WTC11 (cell line): ENCODE measurements at regions of chr11 and their contacts with region 1.

Region 1: GRCh38 chr11:31107062-31107461 is 262.5 kb downstream of the DCDC1 start:
- DNase-seq: peak; percentile 77
- ATAC-seq: peak; percentile 92
- H3K4me3 Mint-ChIP-seq: no peak overlapping the region
- H3K27ac Mint-ChIP-seq: no peak overlapping the region
- H3K4me1 Mint-ChIP-seq: peaks cover 15% of the 10 kb centered on the region
- H3K27me3 Mint-ChIP-seq: no peaks in the 10 kb centered on the region
- CTCF ChIP-seq: peak; percentile 76

Region 2: DNA sequence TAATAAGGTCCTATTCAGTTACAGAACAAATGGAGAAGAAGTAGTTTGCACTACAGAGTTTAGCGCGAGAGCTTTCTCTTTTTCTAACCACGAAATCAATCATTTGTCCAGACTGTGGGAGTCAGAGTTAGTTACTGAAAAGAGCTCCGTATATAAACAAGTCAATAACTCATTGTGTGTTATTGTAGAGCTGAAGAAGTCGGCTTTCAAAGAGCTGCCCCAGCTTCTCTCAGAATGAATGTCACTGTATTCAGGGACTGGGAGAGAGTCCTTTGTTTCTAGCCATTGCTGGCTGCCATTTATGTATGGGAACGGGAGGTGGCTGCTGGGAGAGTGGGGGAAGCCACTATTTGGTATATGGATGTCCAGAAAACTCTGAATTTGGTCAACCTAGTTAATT is 34.7 kb after region 1 on chr11:
- CTCF ChIA-PET with region 1: interaction called, 24 read pairs
- POLR2A ChIA-PET with region 1: no interaction called
- DNase-seq: no peak
- ATAC-seq: peak; percentile 29; the same call in 1 of the 2 replicates
- H3K4me3 Mint-ChIP-seq: no peak overlapping the region
- H3K27ac Mint-ChIP-seq: no peak overlapping the region
- H3K4me1 Mint-ChIP-seq: peaks cover 40% of the 10 kb centered on the region
- H3K27me3 Mint-ChIP-seq: no peaks in the 10 kb centered on the region; the same call in 1 of the 2 replicates
- CTCF ChIP-seq: no peak

Region 3: GRCh38 chr11:31233424-31233823 is 126.4 kb after region 1 on chr11:
- CTCF ChIA-PET with region 1: interaction called, 82 read pairs
- POLR2A ChIA-PET with region 1: no interaction called
- DNase-seq: no peak
- ATAC-seq: peak; percentile 60
- H3K4me3 Mint-ChIP-seq: no peak overlapping the region
- H3K27ac Mint-ChIP-seq: no peak overlapping the region
- H3K4me1 Mint-ChIP-seq: peaks cover 24% of the 10 kb centered on the region
- H3K27me3 Mint-ChIP-seq: no peaks in the 10 kb centered on the region
- CTCF ChIP-seq: no peak

Region 4: DNA sequence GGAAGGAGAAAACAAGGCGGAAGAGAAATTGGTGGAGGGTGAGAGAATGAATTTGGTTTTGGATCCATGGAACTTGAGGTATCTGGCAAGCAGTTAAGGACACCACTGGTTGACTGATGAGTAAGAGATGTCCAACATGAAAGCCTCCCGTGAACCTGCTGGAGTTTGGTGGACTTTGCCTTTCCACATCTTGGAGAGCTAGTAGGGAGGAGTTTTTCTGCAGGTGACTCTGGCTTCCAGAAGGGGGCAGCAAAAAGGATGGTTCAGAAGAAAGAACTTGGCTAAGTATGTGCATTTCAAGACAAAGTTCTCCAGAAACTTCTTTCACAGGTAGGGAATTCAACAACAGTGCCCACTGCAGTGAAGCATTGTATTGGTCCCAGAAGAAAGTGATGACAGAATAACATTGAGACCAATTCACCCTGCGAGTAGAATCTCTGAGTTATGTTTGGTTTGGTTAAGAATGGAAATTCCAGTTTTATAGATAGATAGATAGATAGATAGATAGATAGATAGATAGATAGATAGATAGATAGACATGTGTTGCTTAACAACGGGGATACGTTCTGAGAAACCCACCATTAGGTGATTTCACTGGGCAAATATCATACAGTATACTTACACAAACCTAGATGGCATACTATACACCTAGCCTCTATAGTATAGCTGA is 234.0 kb after region 1 on chr11:
- CTCF ChIA-PET with region 1: interaction called, 13 read pairs
- POLR2A ChIA-PET with region 1: no interaction called
- DNase-seq: peak; percentile 26
- ATAC-seq: peak; percentile 78
- H3K4me3 Mint-ChIP-seq: no peak overlapping the region
- H3K27ac Mint-ChIP-seq: no peak overlapping the region
- H3K4me1 Mint-ChIP-seq: peaks cover 4% of the 10 kb centered on the region
- H3K27me3 Mint-ChIP-seq: no peaks in the 10 kb centered on the region
- CTCF ChIP-seq: peak; percentile 40

Region 5: GRCh38 chr11:31641477-31642062 is 534.5 kb after region 1 on chr11:
- CTCF ChIA-PET with region 1: interaction called, 10 read pairs
- POLR2A ChIA-PET with region 1: no interaction called
- DNase-seq: peak; percentile 65
- ATAC-seq: 0 out of 2 replicates have a peak, but pooled peaks have one; percentile 38
- H3K4me3 Mint-ChIP-seq: no peak overlapping the region
- H3K27ac Mint-ChIP-seq: no peak overlapping the region
- H3K4me1 Mint-ChIP-seq: no peaks in the 10 kb centered on the region
- H3K27me3 Mint-ChIP-seq: no peaks in the 10 kb centered on the region
- CTCF ChIP-seq: peak; percentile 59